Gastrocnemius medialis (tissue), 4 donors: ENCODE measurements at regions of chr1 and their contacts with region 1.

Region 1: DNA sequence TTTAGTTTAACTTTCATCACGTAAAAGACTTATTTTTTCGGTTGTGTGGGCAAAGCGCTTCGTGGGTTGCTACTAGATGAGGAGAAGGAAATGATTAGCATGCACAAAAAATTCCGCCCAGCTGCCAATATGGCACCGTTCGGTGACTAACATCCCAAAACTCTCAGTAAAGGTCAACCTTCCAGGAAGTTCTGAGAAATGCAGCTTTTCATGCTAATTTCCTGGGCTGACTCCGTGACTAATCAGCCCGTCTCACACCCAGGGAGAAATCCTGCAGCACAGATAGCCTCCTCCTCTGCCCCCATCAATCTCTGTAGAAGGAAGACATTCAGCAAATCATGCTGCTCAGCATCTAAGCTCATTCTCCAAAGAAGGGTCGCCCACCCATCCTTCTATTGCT is 34.1 kb downstream of the TMCO4 start:
- DNase-seq: no peak
- ATAC-seq: no peak
- H3K4me3 ChIP-seq: no peak overlapping the region
- H3K27ac ChIP-seq: no peak overlapping the region
- H3K4me1 ChIP-seq: no peaks in the 10 kb centered on the region
- H3K27me3 ChIP-seq: no peaks in the 10 kb centered on the region
- CTCF ChIP-seq: no peak
- POLR2A ChIP-seq: no peak

Region 2: DNA sequence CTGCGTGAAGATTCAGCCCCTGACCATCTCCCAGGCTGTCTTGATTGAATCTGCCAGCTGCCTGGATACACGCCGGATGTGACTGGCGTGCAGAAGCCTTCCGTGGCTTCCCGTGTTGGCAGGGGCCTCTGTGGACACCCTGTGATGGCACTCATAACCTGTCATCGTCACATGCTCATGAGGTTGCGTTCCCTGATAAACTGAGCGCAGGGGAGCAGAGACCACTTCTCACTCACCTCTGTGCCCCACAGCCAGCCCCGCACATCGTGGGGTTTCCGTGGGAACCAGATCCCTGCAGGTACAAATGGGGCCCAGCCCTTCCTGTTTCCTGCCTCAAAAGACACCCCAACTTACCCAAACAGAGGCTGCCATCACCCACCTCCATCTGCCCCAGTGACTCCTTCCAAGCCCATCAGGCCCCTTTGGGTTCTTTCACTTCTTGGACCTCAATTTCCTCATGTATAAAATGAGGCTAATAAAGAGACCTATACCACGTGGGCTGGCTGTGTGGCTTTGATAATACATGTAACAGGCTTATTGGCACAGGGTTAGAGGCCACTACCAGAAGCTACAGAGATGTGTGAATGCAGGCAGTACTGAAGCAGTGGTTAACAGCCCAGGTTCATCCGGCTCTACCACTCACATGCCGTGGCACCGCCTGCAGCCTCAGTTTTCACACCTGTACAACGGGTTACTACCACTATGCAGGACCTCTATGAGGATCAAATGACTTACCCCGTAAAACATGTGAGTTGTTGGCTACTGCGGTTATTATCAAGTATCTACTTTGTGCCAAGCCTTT is 77.4 kb before region 1 on chr1:
- in situ Hi-C with region 1: no loop called
- intact Hi-C with region 1: no loop called
- DNase-seq: no peak
- ATAC-seq: no peak
- H3K4me3 ChIP-seq: no peak overlapping the region
- H3K27ac ChIP-seq: no peak overlapping the region
- H3K4me1 ChIP-seq: no peaks in the 10 kb centered on the region
- H3K27me3 ChIP-seq: no peaks in the 10 kb centered on the region
- CTCF ChIP-seq: no peak
- POLR2A ChIP-seq: no peak

Region 3: GRCh38 chr1:19811206-19811851 is 45.7 kb after region 1 on chr1:
- in situ Hi-C with region 1: no loop called
- intact Hi-C with region 1: loop called (anchors 5 kb)
- DNase-seq: no peak
- ATAC-seq: no peak
- H3K4me3 ChIP-seq: no peak overlapping the region
- H3K27ac ChIP-seq: no peak overlapping the region
- H3K4me1 ChIP-seq: peaks cover 3 to 12% of the 10 kb centered on the region in 2 donors
- H3K27me3 ChIP-seq: peaks cover 0 to 12% (median 0%) of the 10 kb centered on the region in 3 donors
- CTCF ChIP-seq: peak in 3 of 5 experiments; percentile 20 to 45 (median 39)
- POLR2A ChIP-seq: no peak

Region 4: DNA sequence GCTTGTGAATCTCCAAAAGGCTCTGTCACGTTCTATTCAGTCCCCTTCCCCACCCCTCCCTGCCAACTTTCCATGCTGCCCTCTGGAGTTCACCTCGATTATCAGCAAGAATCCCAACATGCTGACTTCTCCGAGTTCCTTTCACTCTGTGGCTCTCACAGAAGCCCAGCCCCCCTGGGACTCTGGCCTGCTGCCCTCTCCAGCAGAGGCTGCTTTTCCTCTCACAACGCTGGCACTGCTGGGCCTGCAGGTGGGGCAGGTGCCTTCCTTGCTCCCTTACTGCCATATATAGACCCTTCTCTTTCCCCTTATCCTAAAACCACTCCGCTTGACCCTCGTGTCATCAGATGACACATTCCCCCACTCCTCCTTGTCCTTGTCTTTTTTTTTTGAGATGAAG is 59.7 kb after region 1 on chr1:
- in situ Hi-C with region 1: no loop called
- intact Hi-C with region 1: no loop called
- DNase-seq: no peak
- ATAC-seq: no peak
- H3K4me3 ChIP-seq: no peak overlapping the region
- H3K27ac ChIP-seq: no peak overlapping the region
- H3K4me1 ChIP-seq: no peaks in the 10 kb centered on the region
- H3K27me3 ChIP-seq: peaks cover 0 to 14% (median 0%) of the 10 kb centered on the region in 3 donors
- CTCF ChIP-seq: no peak
- POLR2A ChIP-seq: no peak